Prostate gland (tissue), 2 donors: ENCODE measurements at regions of chr2 and their contacts with region 1.

Region 1: DNA sequence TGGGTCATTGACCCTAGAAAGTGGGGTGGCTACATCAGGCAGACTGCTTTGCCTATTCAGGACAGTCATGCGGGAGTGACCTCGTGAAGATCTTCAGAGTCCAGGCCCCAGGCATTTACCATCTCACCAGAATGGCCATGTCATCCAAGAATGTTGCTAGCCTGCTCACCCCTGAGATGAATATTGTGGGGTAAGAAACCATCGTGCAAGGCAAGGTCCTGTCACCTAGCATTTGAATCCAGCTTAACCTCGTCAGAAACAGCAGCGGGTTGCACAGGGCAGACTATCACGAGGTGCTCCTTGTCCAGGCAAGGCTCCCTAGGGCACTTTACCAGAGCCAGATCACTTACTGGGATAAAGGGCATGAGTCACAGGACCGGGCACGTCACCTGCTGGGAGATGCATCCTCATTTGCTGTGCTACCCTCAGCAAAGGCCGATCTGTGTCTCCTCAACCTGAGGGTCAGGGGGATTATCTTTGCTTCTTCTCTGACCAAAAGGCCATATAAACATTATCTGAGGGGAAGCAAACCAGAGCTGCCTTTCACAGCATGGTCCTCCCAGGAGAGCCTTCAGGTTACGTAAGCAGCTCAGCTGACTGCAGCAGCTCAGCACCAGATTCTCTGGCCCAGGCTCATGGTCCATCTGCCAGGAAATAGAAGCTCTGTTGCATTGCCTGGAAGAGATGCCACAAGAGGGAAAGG is 162.4 kb downstream of the ACKR3 start:
- DNase-seq: no peak
- H3K4me3 ChIP-seq: no peak overlapping the region
- H3K27ac ChIP-seq: no peak overlapping the region
- H3K4me1 ChIP-seq: no peaks in the 10 kb centered on the region
- H3K27me3 ChIP-seq: no peaks in the 10 kb centered on the region
- CTCF ChIP-seq: no peak
- POLR2A ChIP-seq: no peak

Region 2: GRCh38 chr2:236663287-236664101 is 68.5 kb before region 1 on chr2:
- intact Hi-C with region 1: loop called (anchors 5 kb)
- DNase-seq: no peak
- H3K4me3 ChIP-seq: no peak overlapping the region
- H3K27ac ChIP-seq: peak overlapping the region in 1 of 2 donors; percentile 30
- H3K4me1 ChIP-seq: no peaks in the 10 kb centered on the region
- H3K27me3 ChIP-seq: no peaks in the 10 kb centered on the region
- CTCF ChIP-seq: no peak
- POLR2A ChIP-seq: no peak

Region 3: DNA sequence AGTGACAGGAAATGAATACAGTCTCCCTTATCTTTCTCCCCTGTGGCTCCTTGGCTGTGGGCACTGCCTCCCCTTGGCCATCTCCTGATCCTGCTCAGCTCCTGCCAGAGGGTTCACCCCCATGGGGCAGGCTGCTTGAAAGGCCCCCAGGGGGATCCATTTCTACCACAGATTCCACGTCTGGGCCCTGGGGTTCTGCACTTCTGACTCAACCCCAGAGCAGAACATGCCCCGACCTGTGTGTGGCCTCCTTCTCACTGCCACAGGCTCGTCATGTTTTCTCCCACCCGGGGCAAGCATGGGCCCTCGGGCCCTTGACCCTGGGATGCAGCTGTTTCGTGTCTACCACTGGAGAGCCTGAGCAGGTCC is 40.2 kb before region 1 on chr2:
- intact Hi-C with region 1: no loop called
- DNase-seq: no peak
- H3K4me3 ChIP-seq: no peak overlapping the region
- H3K27ac ChIP-seq: no peak overlapping the region
- H3K4me1 ChIP-seq: peaks cover 5% of the 10 kb centered on the region
- H3K27me3 ChIP-seq: no peaks in the 10 kb centered on the region
- CTCF ChIP-seq: no peak
- POLR2A ChIP-seq: no peak